ENCODE measurements at regions of chr5 and their contacts with region 1.

Region 1: GRCh38 chr5:174424219-174425053 is 299.9 kb upstream of the MSX2 start:
- DNase-seq: no peak
- H3K4me3 ChIP-seq: no peak overlapping the region
- H3K4me3 Mint-ChIP-seq: no peak overlapping the region
- H3K27ac Mint-ChIP-seq: no peak overlapping the region
- H3K4me1 ChIP-seq: peaks cover 18% of the 10 kb centered on the region
- H3K4me1 Mint-ChIP-seq: peaks cover 28% of the 10 kb centered on the region
- H3K27me3 ChIP-seq: no peaks in the 10 kb centered on the region
- H3K27me3 Mint-ChIP-seq: no peaks in the 10 kb centered on the region
- CTCF ChIP-seq: no peak

Region 2: DNA sequence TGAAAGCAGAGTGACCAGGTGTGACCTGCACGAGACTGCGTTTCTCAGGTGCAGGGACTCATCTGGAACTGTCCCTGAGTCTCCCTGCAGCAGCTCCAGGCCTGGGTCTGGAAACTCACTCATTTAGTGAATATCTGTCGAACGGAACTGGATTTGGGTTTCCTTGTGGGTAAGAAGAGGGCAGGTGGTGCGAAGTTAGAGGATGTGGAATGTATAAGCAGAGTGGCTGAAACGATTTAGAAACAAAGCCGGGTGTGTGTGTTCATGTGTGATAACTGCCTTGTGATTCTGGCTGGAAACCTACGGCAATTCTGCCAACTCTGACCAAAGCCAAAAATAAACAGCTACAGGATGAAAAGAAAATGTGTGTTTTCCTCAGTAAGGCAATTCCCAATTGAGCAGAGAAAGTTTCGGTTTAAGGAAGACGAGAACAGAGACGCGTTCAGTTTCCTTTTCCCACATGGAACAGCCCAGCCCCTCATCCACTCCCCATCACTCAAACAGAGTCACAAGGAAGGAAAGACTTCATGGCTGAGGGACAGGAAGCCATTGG is 248.6 kb before region 1 on chr5:
- CTCF ChIA-PET with region 1: no interaction called
- POLR2A ChIA-PET with region 1: no interaction called
- intact Hi-C with region 1: no loop called
- DNase-seq: no peak
- H3K4me3 ChIP-seq: no peak overlapping the region
- H3K4me3 Mint-ChIP-seq: no peak overlapping the region
- H3K27ac Mint-ChIP-seq: no peak overlapping the region
- H3K4me1 ChIP-seq: no peaks in the 10 kb centered on the region
- H3K4me1 Mint-ChIP-seq: no peaks in the 10 kb centered on the region
- H3K27me3 ChIP-seq: no peaks in the 10 kb centered on the region; the same call in none of the 2 replicates
- H3K27me3 Mint-ChIP-seq: peaks cover 23% of the 10 kb centered on the region
- CTCF ChIP-seq: no peak

Region 3: GRCh38 chr5:174436781-174437201 is 12.4 kb after region 1 on chr5:
- CTCF ChIA-PET with region 1: no interaction called
- POLR2A ChIA-PET with region 1: no interaction called
- intact Hi-C with region 1: no loop called
- DNase-seq: no peak
- H3K4me3 ChIP-seq: no peak overlapping the region
- H3K4me3 Mint-ChIP-seq: no peak overlapping the region
- H3K27ac Mint-ChIP-seq: no peak overlapping the region
- H3K4me1 ChIP-seq: peaks cover 1% of the 10 kb centered on the region; the same call in 1 of the 2 replicates
- H3K4me1 Mint-ChIP-seq: peaks cover 6% of the 10 kb centered on the region
- H3K27me3 ChIP-seq: no peaks in the 10 kb centered on the region
- H3K27me3 Mint-ChIP-seq: no peaks in the 10 kb centered on the region
- CTCF ChIP-seq: no peak

Region 4: GRCh38 chr5:174464504-174465165 is 40.2 kb after region 1 on chr5:
- CTCF ChIA-PET with region 1: interaction called, 18 read pairs
- POLR2A ChIA-PET with region 1: no interaction called
- intact Hi-C with region 1: loop called (anchors 1 kb)
- DNase-seq: no peak
- H3K4me3 ChIP-seq: no peak overlapping the region
- H3K4me3 Mint-ChIP-seq: no peak overlapping the region
- H3K27ac Mint-ChIP-seq: no peak overlapping the region
- H3K4me1 ChIP-seq: peaks cover 44% of the 10 kb centered on the region
- H3K4me1 Mint-ChIP-seq: peaks cover 35% of the 10 kb centered on the region
- H3K27me3 ChIP-seq: no peaks in the 10 kb centered on the region
- H3K27me3 Mint-ChIP-seq: no peaks in the 10 kb centered on the region
- CTCF ChIP-seq: peak; percentile 32 to 51

Region 5: DNA sequence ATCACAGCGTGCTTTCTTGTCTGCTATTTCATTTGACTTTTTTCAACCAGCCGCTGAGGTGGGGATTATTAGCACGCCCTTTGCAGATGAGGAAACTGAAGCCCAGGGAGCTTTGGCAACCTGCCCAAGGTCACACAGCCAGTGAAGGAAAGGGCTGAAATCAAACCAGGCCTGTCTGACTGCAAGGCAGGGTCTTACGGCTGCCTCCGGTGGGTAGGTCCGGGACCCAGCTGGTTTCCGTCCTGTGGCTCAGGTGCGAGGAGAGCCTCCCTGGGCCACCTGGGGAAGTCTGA is 193.5 kb after region 1 on chr5:
- CTCF ChIA-PET with region 1: no interaction called
- POLR2A ChIA-PET with region 1: no interaction called
- intact Hi-C with region 1: no loop called
- DNase-seq: peak in 1 of 2 experiments; percentile 44
- H3K4me3 ChIP-seq: no peak overlapping the region
- H3K4me3 Mint-ChIP-seq: peak overlapping the region; percentile 4
- H3K27ac Mint-ChIP-seq: peak overlapping the region; percentile 63
- H3K4me1 ChIP-seq: peaks cover 76% of the 10 kb centered on the region
- H3K4me1 Mint-ChIP-seq: peaks cover 64% of the 10 kb centered on the region
- H3K27me3 ChIP-seq: no peaks in the 10 kb centered on the region
- H3K27me3 Mint-ChIP-seq: no peaks in the 10 kb centered on the region
- CTCF ChIP-seq: no peak

Region 6: GRCh38 chr5:174735498-174736330 is 311.3 kb after region 1 on chr5:
- CTCF ChIA-PET with region 1: interaction called, 37 read pairs
- POLR2A ChIA-PET with region 1: no interaction called
- intact Hi-C with region 1: loop called (anchors 1 kb)
- DNase-seq: peak; percentile 87 to 90
- H3K4me3 ChIP-seq: peak overlapping the region; percentile 50
- H3K4me3 Mint-ChIP-seq: peak overlapping the region; percentile 86
- H3K27ac Mint-ChIP-seq: peak overlapping the region; percentile 52
- H3K4me1 ChIP-seq: peaks cover 36% of the 10 kb centered on the region
- H3K4me1 Mint-ChIP-seq: peaks cover 24% of the 10 kb centered on the region
- H3K27me3 ChIP-seq: no peaks in the 10 kb centered on the region
- H3K27me3 Mint-ChIP-seq: no peaks in the 10 kb centered on the region
- CTCF ChIP-seq: peak; percentile 74 to 90

Region 7: GRCh38 chr5:175082866-175083590 is 658.6 kb after region 1 on chr5:
- CTCF ChIA-PET with region 1: no interaction called
- POLR2A ChIA-PET with region 1: no interaction called
- intact Hi-C with region 1: loop called (anchors 5 kb)
- DNase-seq: no peak
- H3K4me3 ChIP-seq: no peak overlapping the region
- H3K4me3 Mint-ChIP-seq: no peak overlapping the region
- H3K27ac Mint-ChIP-seq: no peak overlapping the region
- H3K4me1 ChIP-seq: no peaks in the 10 kb centered on the region
- H3K4me1 Mint-ChIP-seq: no peaks in the 10 kb centered on the region
- H3K27me3 ChIP-seq: no peaks in the 10 kb centered on the region
- H3K27me3 Mint-ChIP-seq: peaks cover 8% of the 10 kb centered on the region
- CTCF ChIP-seq: no peak

Region 8: DNA sequence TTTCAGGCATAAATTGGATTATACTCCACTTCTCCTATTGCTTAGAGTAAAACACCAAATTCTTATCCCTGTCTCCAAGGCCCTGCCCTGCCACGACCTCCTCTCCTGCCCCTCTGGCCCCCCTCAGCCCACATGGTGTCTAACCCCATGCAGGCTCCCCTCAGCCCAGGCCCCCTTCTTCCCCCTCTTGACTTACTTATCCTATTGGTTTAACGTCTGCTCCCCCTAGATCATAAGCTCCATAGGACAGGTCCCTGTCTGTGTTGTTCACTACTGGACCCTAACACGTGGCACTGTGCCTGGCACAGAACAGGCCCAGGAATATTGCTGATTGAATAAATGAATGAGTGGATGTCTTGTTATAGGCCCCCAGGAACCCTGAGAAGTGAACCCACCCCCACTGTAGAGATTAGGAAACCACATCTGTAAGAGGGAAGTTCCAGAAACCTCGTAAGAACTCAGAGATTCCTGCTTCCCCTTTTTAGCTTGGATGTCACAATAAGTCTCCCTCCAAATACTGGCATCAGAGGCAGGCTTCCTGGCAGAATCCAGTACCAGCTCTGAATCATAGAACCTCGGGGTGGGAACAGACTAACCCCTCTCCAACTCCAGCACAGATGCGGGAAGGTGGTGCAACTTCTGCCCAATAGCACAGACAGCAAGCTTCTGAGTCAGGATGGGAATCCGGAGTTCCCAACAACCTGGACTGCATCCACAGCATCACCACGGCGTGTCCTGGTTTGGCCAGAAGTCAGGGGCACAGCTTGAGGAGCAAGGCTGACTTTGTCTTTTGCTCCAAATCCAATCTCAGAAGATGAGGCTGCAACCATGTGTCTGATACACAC is 1264.9 kb after region 1 on chr5:
- CTCF ChIA-PET with region 1: no interaction called
- POLR2A ChIA-PET with region 1: no interaction called
- intact Hi-C with region 1: no loop called
- DNase-seq: no peak
- H3K4me3 ChIP-seq: no peak overlapping the region
- H3K4me3 Mint-ChIP-seq: no peak overlapping the region
- H3K27ac Mint-ChIP-seq: no peak overlapping the region
- H3K4me1 ChIP-seq: no peaks in the 10 kb centered on the region
- H3K4me1 Mint-ChIP-seq: no peaks in the 10 kb centered on the region
- H3K27me3 ChIP-seq: no peaks in the 10 kb centered on the region; the same call in 1 of the 2 replicates
- H3K27me3 Mint-ChIP-seq: peaks cover 9% of the 10 kb centered on the region
- CTCF ChIP-seq: no peak

Measured in Caco-2 (cell line).